Activated naive CD4-positive, alpha-beta T cell treated with anti-CD3 and anti-CD28 coated beads for 36 hours (primary cell): ENCODE measurements at regions of chr9 and their contacts with region 1.

Region 1: DNA sequence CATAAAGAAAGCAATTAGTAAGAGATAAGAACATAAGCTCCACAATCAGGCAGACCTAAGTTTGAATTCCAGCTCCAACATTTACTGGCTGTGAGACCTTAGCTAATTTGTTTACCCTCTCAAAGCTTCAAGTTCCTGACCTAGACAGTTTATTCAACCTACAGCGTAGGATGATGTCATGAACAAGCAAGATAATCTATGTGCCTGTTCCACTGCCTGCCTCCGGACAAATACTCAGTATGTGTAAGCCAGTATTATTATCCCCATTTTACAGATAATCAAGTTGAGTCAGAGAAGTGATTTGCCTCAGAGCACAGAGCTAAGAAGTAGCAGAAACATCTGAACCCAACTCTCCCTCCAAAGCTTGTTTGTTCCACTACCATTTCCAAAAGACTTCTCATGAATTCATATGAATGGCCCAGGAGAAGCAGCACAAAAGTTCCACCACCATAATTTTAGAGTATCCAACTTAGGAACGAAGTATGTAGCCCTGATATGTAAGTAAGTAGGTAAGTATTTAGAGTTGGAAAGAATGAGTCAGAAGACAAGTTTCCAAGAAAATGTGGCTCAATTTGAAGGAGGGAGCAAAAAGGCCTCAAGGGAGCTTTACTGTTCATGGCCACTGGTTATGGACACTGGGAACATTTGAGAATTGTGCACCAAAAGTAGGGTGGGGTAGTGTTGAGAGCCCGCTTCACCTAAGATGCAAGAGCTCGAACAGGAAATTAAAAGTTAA is 398.2 kb downstream of the NFIB start:
- DNase-seq: no peak
- H3K4me3 Mint-ChIP-seq: no peak overlapping the region
- H3K27ac Mint-ChIP-seq: no peak overlapping the region
- H3K4me1 Mint-ChIP-seq: no peaks in the 10 kb centered on the region
- H3K27me3 Mint-ChIP-seq: no peaks in the 10 kb centered on the region

Region 2: DNA sequence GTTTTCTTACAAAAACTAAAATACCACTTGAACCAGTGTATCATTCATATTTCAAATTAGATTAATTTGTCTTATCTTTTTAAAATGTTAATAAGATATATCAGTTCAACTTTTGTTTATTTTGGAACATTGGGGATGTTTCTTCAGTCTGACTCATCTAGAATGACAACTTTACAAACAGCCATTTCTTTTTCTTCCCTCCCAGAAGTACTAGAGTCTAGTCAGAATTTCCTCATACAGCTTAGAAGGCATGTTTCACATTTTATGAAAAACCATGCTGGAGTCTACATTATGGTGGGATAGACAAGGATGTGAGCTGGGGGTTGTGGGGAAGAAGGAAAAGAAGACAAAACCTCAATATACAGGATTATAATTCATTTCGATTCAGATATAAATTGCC is 135.7 kb after region 1 on chr9:
- CTCF ChIA-PET with region 1: no interaction called
- intact Hi-C with region 1: loop called (anchors 5 kb)
- DNase-seq: no peak
- H3K4me3 Mint-ChIP-seq: no peak overlapping the region
- H3K27ac Mint-ChIP-seq: no peak overlapping the region
- H3K4me1 Mint-ChIP-seq: no peaks in the 10 kb centered on the region
- H3K27me3 Mint-ChIP-seq: no peaks in the 10 kb centered on the region